ENCODE measurements at regions of chr6 and their contacts with region 1.

Region 1: GRCh38 chr6:109382576-109383437 is 540 bp upstream of the CD164 start:
- DNase-seq: peak; percentile 99
- ATAC-seq: peak; percentile 71
- H3K4me3 ChIP-seq: peak overlapping the region; percentile 87 to 98 (median 90)
- H3K4me3 Mint-ChIP-seq: peak overlapping the region; percentile 94
- H3K27ac ChIP-seq: peak overlapping the region; percentile 94 to 97
- H3K27ac Mint-ChIP-seq: peak overlapping the region; percentile 100
- H3K4me1 ChIP-seq: peaks cover 40 to 41% of the 10 kb centered on the region in 2 donors
- H3K4me1 Mint-ChIP-seq: peaks cover 41% of the 10 kb centered on the region
- H3K27me3 ChIP-seq: no peaks in the 10 kb centered on the region
- H3K27me3 Mint-ChIP-seq: no peaks in the 10 kb centered on the region
- CTCF ChIP-seq: peak; percentile 79

Region 2: DNA sequence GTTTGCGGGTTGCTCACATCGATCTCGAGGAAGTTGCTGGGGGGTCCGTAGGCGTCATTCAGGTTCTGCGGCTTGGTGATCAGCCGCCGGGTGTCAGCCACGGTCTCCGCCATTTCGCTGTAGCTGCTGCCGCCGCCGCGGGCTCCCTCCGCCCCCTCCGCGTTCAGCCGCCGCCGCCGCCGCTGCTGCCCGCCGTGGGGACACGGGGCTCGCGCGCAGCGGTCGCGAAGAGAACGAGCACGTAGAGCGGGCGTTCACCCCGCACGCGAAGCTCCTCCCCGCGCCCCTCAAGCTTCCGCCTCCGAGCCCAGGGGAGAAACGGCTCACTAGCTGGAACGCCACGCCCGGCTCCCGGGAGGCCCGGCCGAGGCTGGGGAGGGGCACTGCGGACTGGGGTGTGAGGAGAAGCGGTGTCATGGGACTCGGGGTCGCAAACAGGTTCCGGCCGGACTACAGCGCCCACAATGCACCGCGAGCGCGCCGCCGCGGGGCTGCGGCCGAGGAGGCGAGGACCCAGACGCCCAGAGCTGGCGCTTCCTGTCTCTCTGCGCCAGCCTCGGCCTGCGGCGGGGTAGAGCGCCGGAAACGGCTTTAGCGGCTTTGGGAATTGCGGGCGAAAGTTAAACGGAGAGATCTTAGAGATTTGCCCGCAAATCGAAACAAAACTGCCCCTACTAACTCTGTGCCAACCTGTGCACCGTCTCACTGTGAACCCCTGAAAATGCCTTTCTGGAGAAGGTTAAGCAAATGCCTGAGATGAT is 1121.8 kb before region 1 on chr6 and contains the start of gene SNX3:
- CTCF ChIA-PET with region 1: no interaction called
- POLR2A ChIA-PET with region 1: no interaction called
- intact Hi-C with region 1: loop called (anchors 2 kb)
- DNase-seq: peak; percentile 99
- ATAC-seq: peak; percentile 90
- H3K4me3 ChIP-seq: peak within 1 kb of the TSS; percentile 95 to 99 (median 96)
- H3K4me3 Mint-ChIP-seq: peak within 1 kb of the TSS; percentile 89
- H3K27ac ChIP-seq: peak within 1 kb of the TSS; percentile 91 to 97
- H3K27ac Mint-ChIP-seq: peak within 1 kb of the TSS; percentile 93
- H3K4me1 ChIP-seq: peaks cover 30 to 35% of the 10 kb centered on the region in 2 donors
- H3K4me1 Mint-ChIP-seq: peaks cover 30% of the 10 kb centered on the region
- H3K27me3 ChIP-seq: no peaks in the 10 kb centered on the region
- H3K27me3 Mint-ChIP-seq: no peaks in the 10 kb centered on the region
- CTCF ChIP-seq: no peak
- total RNA-seq, gene SNX3: 95.3 and 96.0 TPM in 2 replicates

Region 3: GRCh38 chr6:109009236-109009961 is 373.4 kb before region 1 on chr6:
- CTCF ChIA-PET with region 1: no interaction called
- POLR2A ChIA-PET with region 1: no interaction called
- intact Hi-C with region 1: loop called (anchors 5 kb)
- DNase-seq: peak; percentile 94
- ATAC-seq: peak; percentile 98
- H3K4me3 ChIP-seq: peak overlapping the region; percentile 77 to 97 (median 89)
- H3K4me3 Mint-ChIP-seq: peak overlapping the region; percentile 98
- H3K27ac ChIP-seq: peak overlapping the region; percentile 87 to 90
- H3K27ac Mint-ChIP-seq: peak overlapping the region; percentile 97
- H3K4me1 ChIP-seq: peaks cover 32 to 52% of the 10 kb centered on the region in 2 donors
- H3K4me1 Mint-ChIP-seq: peaks cover 64% of the 10 kb centered on the region
- H3K27me3 ChIP-seq: no peaks in the 10 kb centered on the region
- H3K27me3 Mint-ChIP-seq: no peaks in the 10 kb centered on the region
- CTCF ChIP-seq: no peak

Region 4: DNA sequence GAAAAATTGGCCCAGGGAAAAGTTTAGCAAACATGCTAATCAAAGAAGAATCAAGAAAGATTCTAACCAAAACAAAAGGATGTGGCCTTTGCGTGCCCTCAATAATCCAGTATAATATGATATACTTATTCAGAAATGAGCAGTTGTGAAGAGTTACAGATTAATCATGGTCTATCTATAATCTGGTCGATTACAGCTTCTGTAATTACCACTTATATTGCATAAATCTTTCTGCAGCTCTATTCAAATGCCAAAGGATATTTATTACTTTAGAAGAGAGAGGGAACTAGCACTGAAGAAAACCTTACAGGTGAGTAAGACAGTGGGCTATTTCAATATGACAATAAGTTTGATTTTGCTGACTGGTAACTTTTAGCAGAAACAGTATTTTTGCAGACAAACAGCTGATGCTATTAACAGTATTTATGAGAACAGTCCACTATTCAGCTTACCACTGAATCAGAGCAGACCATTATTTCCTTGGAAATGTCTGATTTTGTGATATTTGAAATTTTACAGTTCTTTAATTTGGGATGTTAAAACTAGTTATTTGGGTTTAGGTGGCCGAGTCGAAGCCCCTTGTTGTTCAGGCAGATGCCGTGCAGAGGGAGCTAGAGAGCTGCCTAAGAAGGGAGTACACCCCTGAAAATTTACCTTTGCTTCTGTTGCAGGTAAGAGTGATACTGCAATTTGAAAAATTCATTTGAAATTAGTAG is 195.2 kb before region 1 on chr6:
- CTCF ChIA-PET with region 1: interaction called, 124 read pairs
- POLR2A ChIA-PET with region 1: interaction called, 5 read pairs
- intact Hi-C with region 1: loop called (anchors 1 kb)
- DNase-seq: peak; percentile 71
- ATAC-seq: peak; percentile 82
- H3K4me3 ChIP-seq: no peak overlapping the region
- H3K4me3 Mint-ChIP-seq: no peak overlapping the region
- H3K27ac ChIP-seq: no peak overlapping the region
- H3K27ac Mint-ChIP-seq: no peak overlapping the region
- H3K4me1 ChIP-seq: peaks cover 8 to 16% of the 10 kb centered on the region in 2 donors
- H3K4me1 Mint-ChIP-seq: peaks cover 9% of the 10 kb centered on the region
- H3K27me3 ChIP-seq: peaks cover 0 to 4% (median 0%) of the 10 kb centered on the region in 4 experiments
- H3K27me3 Mint-ChIP-seq: peaks cover 11% of the 10 kb centered on the region
- CTCF ChIP-seq: peak; percentile 97

Region 5: GRCh38 chr6:109455502-109456282 is 72.9 kb after region 1 on chr6 and contains the start of gene MICAL1:
- CTCF ChIA-PET with region 1: interaction called, 28 read pairs
- POLR2A ChIA-PET with region 1: interaction called, 34 read pairs
- intact Hi-C with region 1: loop called (anchors 1 kb)
- DNase-seq: peak; percentile 94
- ATAC-seq: peak; percentile 61
- H3K4me3 ChIP-seq: peak within 1 kb of the TSS; percentile 73 to 99 (median 93)
- H3K4me3 Mint-ChIP-seq: peak within 1 kb of the TSS; percentile 95
- H3K27ac ChIP-seq: peak within 1 kb of the TSS; percentile 98 to 99
- H3K27ac Mint-ChIP-seq: peak within 1 kb of the TSS; percentile 99
- H3K4me1 ChIP-seq: peaks cover 82 to 83% of the 10 kb centered on the region in 2 donors
- H3K4me1 Mint-ChIP-seq: peaks cover 82% of the 10 kb centered on the region
- H3K27me3 ChIP-seq: no peaks in the 10 kb centered on the region
- H3K27me3 Mint-ChIP-seq: no peaks in the 10 kb centered on the region
- CTCF ChIP-seq: peak; percentile 53
- total RNA-seq, gene MICAL1: 202 TPM in 2 replicates

Region 6: GRCh38 chr6:109690737-109691621 is 308.2 kb after region 1 on chr6 and contains the starts of genes AK9 and FIG4:
- CTCF ChIA-PET with region 1: interaction called, 8 read pairs
- POLR2A ChIA-PET with region 1: interaction called, 5 read pairs
- intact Hi-C with region 1: loop called (anchors 1 kb)
- DNase-seq: peak; percentile 91
- ATAC-seq: peak; percentile 92
- H3K4me3 ChIP-seq: peak within 1 kb of the TSS; percentile 82 to 99 (median 93)
- H3K4me3 Mint-ChIP-seq: peak within 1 kb of the TSS; percentile 90
- H3K27ac ChIP-seq: peak within 1 kb of the TSS; percentile 77 to 93
- H3K27ac Mint-ChIP-seq: peak within 1 kb of the TSS; percentile 99
- H3K4me1 ChIP-seq: peaks cover 26 to 29% of the 10 kb centered on the region in 2 donors
- H3K4me1 Mint-ChIP-seq: peaks cover 39% of the 10 kb centered on the region
- H3K27me3 ChIP-seq: no peaks in the 10 kb centered on the region
- H3K27me3 Mint-ChIP-seq: no peaks in the 10 kb centered on the region
- CTCF ChIP-seq: peak; percentile 26
- total RNA-seq, gene AK9: 26.5 and 27.1 TPM in 2 replicates
- total RNA-seq, gene FIG4: 31.5 and 32.8 TPM in 2 replicates